Activated T-helper 1 cell treated with anti-CD3 and anti-CD28 coated beads, Interleukin-12 subunit alpha, Interleukin-12 subunit beta, Interleukin-2, Interleukin-4 antibody, amounts not matched to agents 30 ng/mL and 10 ng/mL and 1 ng/mL, durations not matched to agents 14 hours and 24 hours and 36 hours (primary cell): ENCODE measurements at regions of chr12 and their contacts with region 1.

Region 1: DNA sequence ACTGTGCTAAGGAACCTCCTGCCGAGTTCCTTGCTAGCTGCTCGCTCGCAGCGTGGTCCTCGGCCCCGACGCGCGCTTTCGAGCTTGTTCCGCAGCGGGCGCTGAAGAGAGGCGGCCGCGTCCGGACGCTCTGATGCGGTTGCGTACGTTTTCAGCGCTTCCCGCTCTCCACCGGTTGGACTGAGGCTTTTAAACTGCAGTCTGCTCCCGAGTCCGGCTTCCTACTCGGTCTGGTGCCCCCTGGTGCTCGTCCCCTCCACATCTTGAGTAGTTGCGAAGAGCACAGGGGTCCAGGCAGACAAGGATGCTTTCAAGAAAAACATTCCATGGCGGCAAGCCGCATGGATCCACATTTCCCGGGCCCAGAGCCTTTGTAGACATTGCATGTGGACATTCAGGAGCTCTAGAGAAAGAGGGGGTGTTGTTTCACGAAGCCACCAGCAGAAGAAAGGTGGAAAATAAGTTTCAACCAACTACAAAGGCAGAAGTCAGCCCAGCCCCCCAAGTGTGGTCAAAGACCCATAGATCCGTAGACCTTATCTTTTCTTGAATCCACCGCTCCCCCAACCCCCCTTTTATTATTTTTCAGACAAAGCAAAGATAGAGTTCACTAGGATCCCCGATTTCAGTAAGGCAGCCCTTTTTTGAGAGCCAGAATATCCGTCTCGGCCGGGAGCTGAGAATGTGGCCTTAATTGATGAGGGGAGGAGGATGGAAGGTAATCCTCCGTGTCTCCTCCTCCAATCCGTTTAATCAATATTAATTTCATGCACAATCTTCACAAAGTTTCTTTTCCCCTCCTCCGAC is 984 bp upstream of the WNK1 start:
- DNase-seq: peak; percentile 83
- H3K4me3 Mint-ChIP-seq: no peak overlapping the region
- H3K27ac Mint-ChIP-seq: no peak overlapping the region
- H3K4me1 Mint-ChIP-seq: peaks cover 17% of the 10 kb centered on the region
- H3K27me3 Mint-ChIP-seq: no peaks in the 10 kb centered on the region

Region 2: DNA sequence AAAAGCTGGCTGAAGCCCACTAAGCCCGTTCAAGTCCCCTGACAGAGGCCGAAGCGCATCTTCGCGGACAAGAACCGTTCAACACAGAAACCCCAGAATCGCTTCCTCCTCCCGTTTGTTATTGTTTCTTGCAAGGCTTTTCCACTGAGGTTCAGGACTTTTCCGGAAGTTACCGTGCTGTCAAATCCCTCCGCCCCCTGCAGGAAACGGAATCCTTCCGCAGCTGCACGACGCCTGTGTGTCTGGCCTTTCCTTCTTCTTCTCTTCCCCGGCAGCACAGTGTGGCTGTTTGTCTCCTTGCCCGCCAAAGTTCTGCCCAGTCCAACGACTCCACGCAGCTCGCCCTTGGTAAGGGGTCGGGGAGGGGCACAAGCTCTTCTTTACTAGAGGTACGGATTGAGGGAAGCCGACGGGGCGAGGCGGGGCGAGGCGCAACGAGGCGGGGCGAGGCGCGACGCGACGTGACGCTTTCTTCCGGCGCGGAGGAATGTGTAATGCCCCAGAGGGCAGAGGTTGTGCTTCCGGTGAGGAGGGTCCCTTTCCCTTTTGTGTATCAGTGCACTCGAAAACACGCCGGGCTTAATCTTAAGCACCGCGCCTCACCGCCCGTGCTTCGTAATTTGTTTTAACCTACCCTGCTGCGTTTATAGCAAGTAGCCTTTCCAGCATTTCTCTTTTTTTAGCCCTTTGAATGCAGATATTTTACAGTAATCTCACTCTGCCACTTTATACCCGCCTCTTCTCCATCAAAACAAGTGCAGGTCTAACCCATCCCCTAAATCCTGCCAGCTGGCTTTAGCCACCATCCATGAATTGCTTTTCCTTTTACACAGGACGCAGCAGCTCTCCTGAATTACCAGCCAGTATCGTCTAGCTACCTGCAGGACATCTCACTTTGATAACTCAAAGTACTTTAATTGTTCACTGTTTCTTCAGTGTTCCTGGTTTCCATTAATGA is 362.0 kb before region 1 on chr12 and contains the start of gene KDM5A:
- intact Hi-C with region 1: loop called (anchors 2 kb)
- DNase-seq: peak; percentile 82
- H3K4me3 Mint-ChIP-seq: peak within 1 kb of the TSS; percentile 94
- H3K27ac Mint-ChIP-seq: peak within 1 kb of the TSS; percentile 98
- H3K4me1 Mint-ChIP-seq: peaks cover 34% of the 10 kb centered on the region
- H3K27me3 Mint-ChIP-seq: no peaks in the 10 kb centered on the region
- total RNA-seq, gene KDM5A: 81.2 and 83.8 TPM in 2 replicates

Region 3: DNA sequence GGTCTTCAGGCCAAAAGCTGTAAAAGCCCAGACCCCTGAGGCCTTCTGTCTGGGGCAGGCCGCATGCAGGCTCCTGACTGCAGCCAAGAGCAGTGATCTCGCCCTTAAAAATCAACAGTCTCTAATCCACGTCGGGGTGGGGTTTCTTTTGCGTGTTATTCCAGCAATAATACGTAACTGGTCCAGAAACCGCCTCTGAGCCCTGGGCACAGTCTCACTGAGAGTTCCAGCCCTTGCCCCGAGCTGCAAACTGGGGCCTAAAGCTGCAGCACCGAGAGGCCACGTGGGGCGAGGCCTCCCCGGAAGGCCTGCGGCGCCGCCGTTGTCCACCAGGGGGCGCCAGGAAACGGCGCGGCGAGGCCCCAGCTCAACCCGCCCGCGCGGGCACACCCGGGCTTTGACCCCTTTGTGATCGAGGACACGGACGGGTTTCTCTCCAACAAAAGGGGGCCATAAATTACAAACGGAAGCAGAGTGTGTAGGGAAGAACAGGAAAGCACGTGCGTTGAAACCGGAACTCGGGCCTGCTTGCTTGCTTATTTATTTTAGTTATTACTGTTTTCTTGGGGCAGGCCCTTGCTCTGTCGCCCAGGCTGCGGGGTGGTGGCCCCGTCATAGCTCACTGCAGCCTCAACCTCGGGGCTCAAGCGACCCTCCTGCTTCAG is 175.3 kb before region 1 on chr12:
- intact Hi-C with region 1: loop called (anchors 1 kb)
- DNase-seq: peak; percentile 81
- H3K4me3 Mint-ChIP-seq: no peak overlapping the region
- H3K27ac Mint-ChIP-seq: peak overlapping the region; percentile 80
- H3K4me1 Mint-ChIP-seq: peaks cover 33% of the 10 kb centered on the region
- H3K27me3 Mint-ChIP-seq: peaks cover 4% of the 10 kb centered on the region

Region 4: DNA sequence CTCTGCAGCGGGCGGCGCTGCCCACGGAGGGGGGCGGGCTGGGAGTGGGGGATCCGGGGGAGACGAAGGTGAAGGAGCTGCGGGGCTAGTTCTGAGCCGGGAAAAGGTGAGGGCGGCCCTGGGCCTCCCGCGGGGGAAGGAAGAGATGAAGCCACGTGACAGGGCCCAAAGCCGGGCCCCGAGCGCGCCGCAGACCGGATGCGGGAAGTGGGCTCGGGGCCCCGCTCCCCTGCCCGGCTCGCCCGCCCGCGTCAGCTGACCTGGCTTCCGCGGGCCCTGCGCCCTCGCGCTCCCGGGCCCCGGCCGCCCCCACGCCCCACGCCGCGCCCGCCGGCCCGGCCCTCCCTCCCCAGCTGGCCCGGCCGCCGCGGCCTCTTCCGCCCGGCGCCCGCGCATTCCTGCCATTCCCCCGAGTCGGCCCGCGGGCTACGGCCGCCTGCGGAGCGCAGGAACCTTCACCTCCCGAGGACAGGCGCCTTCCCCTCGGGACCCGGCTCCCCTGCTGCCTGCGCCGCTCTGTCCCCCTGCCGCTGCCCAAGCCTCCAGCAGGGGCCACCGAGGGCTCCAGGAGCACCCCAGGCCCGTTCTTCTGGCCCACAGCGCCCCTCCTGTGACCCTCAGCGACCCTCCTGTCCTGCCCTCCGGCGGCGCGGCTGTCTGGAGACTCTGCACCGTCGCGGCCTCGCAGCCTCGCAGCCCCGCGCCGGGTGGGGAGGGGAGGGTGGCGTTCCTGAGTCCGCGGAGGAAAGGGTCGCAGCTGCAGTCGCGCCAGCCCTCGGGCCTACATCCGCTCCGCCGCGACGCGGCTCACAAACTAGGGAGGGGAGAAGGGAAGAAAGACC is 108.5 kb before region 1 on chr12:
- intact Hi-C with region 1: loop called (anchors 1 kb)
- DNase-seq: peak; percentile 78
- H3K4me3 Mint-ChIP-seq: peak overlapping the region; percentile 84
- H3K27ac Mint-ChIP-seq: peak overlapping the region; percentile 95
- H3K4me1 Mint-ChIP-seq: peaks cover 63% of the 10 kb centered on the region
- H3K27me3 Mint-ChIP-seq: no peaks in the 10 kb centered on the region

Region 5: GRCh38 chr12:685388-685787 is 66.0 kb before region 1 on chr12:
- intact Hi-C with region 1: loop called (anchors 1 kb)
- DNase-seq: peak; percentile 79
- H3K4me3 Mint-ChIP-seq: peak overlapping the region; percentile 15
- H3K27ac Mint-ChIP-seq: peak overlapping the region; percentile 90
- H3K4me1 Mint-ChIP-seq: peaks cover 37% of the 10 kb centered on the region
- H3K27me3 Mint-ChIP-seq: no peaks in the 10 kb centered on the region

Region 6: DNA sequence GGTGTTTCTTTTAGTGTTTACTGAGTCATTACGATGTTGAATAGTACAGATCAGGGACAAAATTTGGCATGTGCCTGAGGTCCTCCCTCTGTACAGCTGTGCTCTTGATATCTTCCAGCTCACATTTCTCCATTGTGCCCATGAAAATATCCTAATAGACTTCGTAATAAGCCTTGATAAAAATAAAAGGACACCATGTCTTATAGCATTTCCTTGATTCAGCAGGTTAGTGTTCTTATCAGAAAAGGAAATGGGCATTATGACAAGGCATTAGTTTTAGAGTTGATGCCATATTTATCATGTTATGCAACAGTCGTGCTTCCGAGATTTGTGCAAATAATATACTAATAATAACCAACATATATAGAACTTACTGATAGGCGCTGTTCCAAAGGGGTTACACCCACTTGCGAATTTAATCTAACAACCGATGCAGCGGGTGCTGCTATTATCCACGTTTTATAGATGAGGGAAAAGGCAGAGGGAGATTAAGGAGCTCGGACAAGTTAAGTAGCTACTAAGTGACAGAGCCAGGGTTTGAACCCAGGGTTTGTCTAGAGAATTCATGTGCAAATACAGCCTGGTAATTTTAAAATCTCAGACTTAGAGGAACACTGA is 14.2 kb before region 1 on chr12:
- intact Hi-C with region 1: no loop called
- DNase-seq: no peak
- H3K4me3 Mint-ChIP-seq: no peak overlapping the region
- H3K27ac Mint-ChIP-seq: no peak overlapping the region
- H3K4me1 Mint-ChIP-seq: peaks cover 8% of the 10 kb centered on the region
- H3K27me3 Mint-ChIP-seq: no peaks in the 10 kb centered on the region

Region 7: GRCh38 chr12:765840-766239 is 14.4 kb after region 1 on chr12:
- intact Hi-C with region 1: loop called (anchors 1 kb)
- DNase-seq: no peak
- H3K4me3 Mint-ChIP-seq: no peak overlapping the region
- H3K27ac Mint-ChIP-seq: peak overlapping the region; percentile 18
- H3K4me1 Mint-ChIP-seq: peaks cover 31% of the 10 kb centered on the region
- H3K27me3 Mint-ChIP-seq: no peaks in the 10 kb centered on the region

Region 8: DNA sequence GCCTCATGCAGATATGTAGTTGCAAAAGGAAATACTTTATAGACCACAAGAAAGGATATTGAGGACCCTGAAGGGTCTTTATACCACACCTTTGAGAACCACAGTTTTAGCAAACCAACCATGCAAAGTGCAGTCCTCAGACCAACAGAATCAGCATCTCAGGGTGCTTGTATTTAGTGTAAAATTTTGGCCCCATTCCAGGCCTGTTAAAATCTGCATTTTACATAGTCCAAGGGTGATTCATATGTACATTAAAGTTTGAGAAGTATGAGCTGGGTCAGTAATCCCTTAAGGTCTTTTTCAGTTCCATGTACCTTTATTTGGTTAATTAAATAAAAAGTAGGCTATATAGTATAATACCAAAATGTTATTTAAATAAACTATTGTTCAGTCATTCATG is 92.2 kb after region 1 on chr12:
- intact Hi-C with region 1: no loop called
- DNase-seq: no peak
- H3K4me3 Mint-ChIP-seq: no peak overlapping the region
- H3K27ac Mint-ChIP-seq: no peak overlapping the region
- H3K4me1 Mint-ChIP-seq: peaks cover 33% of the 10 kb centered on the region
- H3K27me3 Mint-ChIP-seq: no peaks in the 10 kb centered on the region

Region 9: DNA sequence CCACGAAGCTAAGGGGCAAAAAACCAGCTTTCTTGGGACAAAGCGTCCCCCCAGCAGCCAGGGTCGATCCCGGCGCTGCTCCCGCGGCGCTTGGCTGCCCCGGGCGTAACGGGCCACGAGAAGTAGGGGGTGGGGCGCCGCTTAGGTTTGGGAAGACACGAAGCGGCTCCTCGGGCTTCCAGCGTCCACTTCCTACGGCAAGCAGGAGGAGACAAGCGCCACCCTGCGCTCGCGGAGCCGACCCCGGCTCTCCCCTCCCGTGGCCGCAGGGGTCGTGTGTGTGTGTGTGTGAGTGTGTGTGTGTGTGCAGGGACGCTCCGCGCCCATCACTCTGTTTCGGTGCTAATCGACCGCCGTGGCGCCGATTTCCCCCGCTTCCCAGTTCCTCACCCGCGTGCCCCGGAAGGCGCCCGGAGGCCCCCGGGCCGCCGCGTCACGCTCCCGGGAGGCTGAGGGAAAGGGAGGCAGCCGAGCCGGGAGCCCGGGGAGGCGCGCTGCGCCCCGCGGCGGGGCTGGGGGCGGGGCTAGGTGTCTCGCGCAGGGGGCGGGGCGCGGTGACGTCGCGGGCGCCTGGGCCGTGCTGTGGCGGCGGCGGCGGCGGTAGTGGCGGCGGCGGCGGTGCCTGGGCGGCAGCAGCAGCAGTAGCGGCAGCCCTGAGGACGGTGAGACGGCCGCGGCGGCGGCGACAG is 239.4 kb after region 1 on chr12 and contains the start of gene ERC1:
- intact Hi-C with region 1: loop called (anchors 2 kb)
- DNase-seq: peak; percentile 82
- H3K4me3 Mint-ChIP-seq: peak within 1 kb of the TSS; percentile 91
- H3K27ac Mint-ChIP-seq: peak within 1 kb of the TSS; percentile 88
- H3K4me1 Mint-ChIP-seq: peaks cover 35% of the 10 kb centered on the region
- H3K27me3 Mint-ChIP-seq: peaks cover 7% of the 10 kb centered on the region
- total RNA-seq, gene ERC1: 33.6 and 34.3 TPM in 2 replicates